Activated CD4-positive, alpha-beta T cell treated with anti-CD3 and anti-CD28 coated beads, Interleukin-2, amount 10 ng/mL, durations not matched to agents 24 days and 14 days (primary cell): ENCODE measurements at regions of chr11 and their contacts with region 1.

Region 1: GRCh38 chr11:14907411-14908213 is 15.6 kb upstream of the CYP2R1 start:
- DNase-seq: peak; percentile 96
- H3K4me3 Mint-ChIP-seq: no peak overlapping the region
- H3K27ac Mint-ChIP-seq: peak overlapping the region; percentile 20
- H3K4me1 Mint-ChIP-seq: peaks cover 51% of the 10 kb centered on the region
- H3K27me3 Mint-ChIP-seq: no peaks in the 10 kb centered on the region

Region 2: GRCh38 chr11:14519917-14520746 is 387.5 kb before region 1 on chr11 and contains the start of gene PSMA1:
- intact Hi-C with region 1: loop called (anchors 1 kb)
- DNase-seq: peak; percentile 98
- H3K4me3 Mint-ChIP-seq: peak within 1 kb of the TSS; percentile 96
- H3K27ac Mint-ChIP-seq: peak within 1 kb of the TSS; percentile 98
- H3K4me1 Mint-ChIP-seq: peaks cover 22% of the 10 kb centered on the region
- H3K27me3 Mint-ChIP-seq: no peaks in the 10 kb centered on the region
- total RNA-seq, gene PSMA1: 334 and 344 TPM in 2 replicates

Region 3: GRCh38 chr11:14643697-14644225 is 263.9 kb before region 1 on chr11 and contains the start of gene PDE3B:
- intact Hi-C with region 1: loop called (anchors 1 kb)
- DNase-seq: peak; percentile 93
- H3K4me3 Mint-ChIP-seq: peak within 1 kb of the TSS; percentile 83
- H3K27ac Mint-ChIP-seq: peak within 1 kb of the TSS; percentile 94
- H3K4me1 Mint-ChIP-seq: peaks cover 31% of the 10 kb centered on the region
- H3K27me3 Mint-ChIP-seq: no peaks in the 10 kb centered on the region
- total RNA-seq, gene PDE3B: 49.3 and 52.8 TPM in 2 replicates

Region 4: GRCh38 chr11:14892036-14892567 is 15.5 kb before region 1 on chr11 and contains the start of gene CYP2R1:
- intact Hi-C with region 1: loop called (anchors 1 kb)
- DNase-seq: peak; percentile 98
- H3K4me3 Mint-ChIP-seq: peak within 1 kb of the TSS; percentile 93
- H3K27ac Mint-ChIP-seq: peak within 1 kb of the TSS; percentile 99
- H3K4me1 Mint-ChIP-seq: peaks cover 53% of the 10 kb centered on the region
- H3K27me3 Mint-ChIP-seq: no peaks in the 10 kb centered on the region
- total RNA-seq, gene CYP2R1: 13.1 and 13.7 TPM in 2 replicates

Region 5: GRCh38 chr11:15006139-15006759 is 98.6 kb after region 1 on chr11:
- intact Hi-C with region 1: loop called (anchors 1 kb)
- DNase-seq: peak; percentile 67
- H3K4me3 Mint-ChIP-seq: no peak overlapping the region
- H3K27ac Mint-ChIP-seq: no peak overlapping the region
- H3K4me1 Mint-ChIP-seq: no peaks in the 10 kb centered on the region
- H3K27me3 Mint-ChIP-seq: peaks cover 48% of the 10 kb centered on the region

Region 6: DNA sequence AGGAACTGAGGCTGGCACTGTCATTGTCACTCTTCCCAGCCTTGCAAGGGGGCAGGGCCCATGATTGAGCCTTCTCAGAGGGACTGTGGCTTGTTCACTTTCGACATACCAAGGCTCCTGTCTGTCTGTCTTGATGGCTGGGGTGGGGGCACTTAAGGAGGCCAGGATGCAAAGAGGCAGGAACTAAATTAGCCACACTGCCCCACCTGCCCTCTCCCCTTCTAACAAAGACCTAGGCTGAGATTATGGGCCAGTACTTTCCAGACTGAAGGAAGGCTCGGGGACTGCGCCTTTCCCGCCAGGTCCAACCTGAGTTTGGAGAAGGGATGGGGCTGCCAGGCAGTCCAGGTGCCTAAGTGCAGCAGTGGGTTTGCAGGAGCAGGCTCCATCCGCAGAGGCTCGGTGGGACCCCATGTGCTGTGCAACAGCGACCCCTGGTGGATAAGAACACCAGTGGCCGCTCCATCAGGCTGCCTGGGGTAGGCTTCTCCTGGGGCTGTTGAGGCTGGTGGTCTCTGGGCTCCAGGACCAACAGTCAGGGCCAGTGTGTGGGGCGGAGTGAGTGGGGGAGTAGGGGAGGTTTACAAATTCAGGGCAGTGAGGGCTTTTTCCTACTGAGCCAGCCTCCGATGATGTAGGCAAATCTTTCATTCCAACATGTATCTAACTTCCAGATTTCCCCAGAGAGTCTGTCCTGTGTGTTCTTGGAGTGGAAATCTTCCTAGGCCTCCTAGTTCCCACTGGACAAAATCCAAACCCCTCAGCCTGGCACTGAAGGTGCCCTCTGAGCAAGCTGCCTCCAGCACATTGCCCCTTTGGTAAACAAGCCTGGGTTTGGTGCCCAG is 301.0 kb after region 1 on chr11:
- intact Hi-C with region 1: loop called (anchors 1 kb)
- DNase-seq: peak; percentile 93
- H3K4me3 Mint-ChIP-seq: no peak overlapping the region
- H3K27ac Mint-ChIP-seq: no peak overlapping the region
- H3K4me1 Mint-ChIP-seq: no peaks in the 10 kb centered on the region
- H3K27me3 Mint-ChIP-seq: peaks cover 11% of the 10 kb centered on the region